PC-3 (cell line): ENCODE measurements at regions of chr14 and their contacts with region 1.

Region 1: DNA sequence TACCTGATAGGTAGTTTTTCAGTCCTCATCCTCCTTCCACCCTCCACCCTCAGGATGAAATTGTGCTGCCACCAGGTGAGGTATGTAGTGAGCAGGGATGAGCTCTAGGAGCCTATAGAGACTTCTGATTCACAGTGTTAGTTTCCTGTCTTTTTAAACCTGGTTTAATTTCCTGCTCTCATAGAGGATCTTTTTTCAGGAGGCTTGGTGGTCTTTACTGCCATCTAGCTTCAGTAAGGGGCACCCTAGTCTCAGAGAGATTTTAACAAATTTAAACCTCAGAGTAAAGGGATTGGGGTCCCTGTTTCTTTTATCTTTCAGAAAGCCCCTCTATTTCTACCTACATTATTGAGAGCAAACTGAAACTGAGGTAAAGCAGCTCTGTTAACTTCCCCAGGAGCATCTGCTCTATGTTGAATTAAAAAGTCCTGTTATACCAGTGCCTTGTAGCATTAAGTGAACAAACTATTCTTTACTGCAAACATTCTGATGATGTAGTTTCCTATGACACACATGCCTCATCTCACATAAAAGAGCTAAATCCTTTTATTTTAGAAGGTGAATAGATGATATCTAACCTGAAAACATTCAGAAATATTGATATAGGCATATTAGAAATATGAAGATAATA is 172.2 kb upstream of the DDHD1 start:
- DNase-seq: peak; percentile 27
- ATAC-seq: peak; percentile 59
- H3K4me3 ChIP-seq: no peak overlapping the region
- H3K27ac ChIP-seq: no peak overlapping the region
- H3K4me1 ChIP-seq: peaks cover 16% of the 10 kb centered on the region
- H3K27me3 ChIP-seq: no peaks in the 10 kb centered on the region
- CTCF ChIP-seq: peak; percentile 52; the same call in 1 of the 2 replicates

Region 2: DNA sequence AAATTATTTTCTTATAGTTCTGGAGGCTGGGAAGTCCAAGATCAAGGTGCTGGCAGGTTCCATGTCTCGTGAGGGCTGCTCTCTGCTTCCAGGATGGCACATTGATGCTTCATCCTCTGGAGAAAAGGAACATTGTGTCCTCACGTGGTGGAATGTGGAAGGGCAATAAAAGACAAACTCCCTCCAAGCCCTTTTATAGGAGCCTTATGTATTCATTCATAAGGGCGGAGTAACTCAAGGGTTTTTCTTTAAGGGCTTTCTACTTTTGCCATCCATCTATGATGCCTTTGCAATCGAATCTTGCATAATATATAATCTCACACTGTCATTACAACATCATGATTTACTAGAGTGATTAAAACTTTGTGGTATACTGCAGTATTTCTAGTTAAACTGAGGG is 39.5 kb before region 1 on chr14:
- CTCF ChIA-PET with region 1: no interaction called
- POLR2A ChIA-PET with region 1: interaction called, 12 read pairs
- intact Hi-C with region 1: no loop called
- DNase-seq: peak; percentile 44
- ATAC-seq: peak; percentile 62
- H3K4me3 ChIP-seq: no peak overlapping the region
- H3K27ac ChIP-seq: no peak overlapping the region
- H3K4me1 ChIP-seq: no peaks in the 10 kb centered on the region
- H3K27me3 ChIP-seq: no peaks in the 10 kb centered on the region
- CTCF ChIP-seq: no peak

Region 3: DNA sequence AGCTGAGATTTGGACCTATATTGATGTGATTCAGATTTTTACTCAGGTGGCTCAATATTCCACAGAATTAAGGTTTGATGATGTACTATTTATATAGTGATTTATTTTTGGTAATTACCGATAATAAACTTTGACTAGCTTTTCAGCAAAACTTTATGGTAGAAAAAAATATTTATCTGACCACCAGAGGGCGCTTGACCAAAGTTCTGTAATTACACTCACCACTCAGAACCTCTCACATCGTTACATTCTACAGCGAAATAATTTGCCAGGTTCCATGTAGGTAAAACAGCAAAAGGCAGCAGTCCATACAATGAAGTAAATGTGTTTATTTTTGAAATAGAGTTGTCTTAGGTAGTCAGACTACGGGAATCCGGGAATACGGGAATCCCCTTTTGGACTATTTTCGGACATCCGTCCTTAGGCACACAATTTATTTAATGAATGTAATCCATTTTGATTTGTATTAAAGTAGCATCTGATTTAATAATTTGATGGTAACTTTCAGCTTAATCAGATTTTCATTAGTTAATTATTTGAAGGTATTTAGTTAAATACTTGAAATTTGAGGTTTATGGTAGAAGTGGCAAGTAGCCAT is 29.2 kb before region 1 on chr14:
- CTCF ChIA-PET with region 1: interaction called, 10 read pairs
- POLR2A ChIA-PET with region 1: no interaction called
- intact Hi-C with region 1: loop called (anchors 1 kb)
- DNase-seq: peak; percentile 67
- ATAC-seq: peak; percentile 71
- H3K4me3 ChIP-seq: no peak overlapping the region
- H3K27ac ChIP-seq: no peak overlapping the region
- H3K4me1 ChIP-seq: no peaks in the 10 kb centered on the region
- H3K27me3 ChIP-seq: no peaks in the 10 kb centered on the region
- CTCF ChIP-seq: peak; percentile 85

Region 4: GRCh38 chr14:53346988-53347387 is 21.7 kb after region 1 on chr14:
- CTCF ChIA-PET with region 1: no interaction called
- POLR2A ChIA-PET with region 1: no interaction called
- intact Hi-C with region 1: no loop called
- DNase-seq: no peak
- ATAC-seq: peak; percentile 35; the same call in 1 of the 2 replicates
- H3K4me3 ChIP-seq: no peak overlapping the region
- H3K27ac ChIP-seq: no peak overlapping the region
- H3K4me1 ChIP-seq: no peaks in the 10 kb centered on the region
- H3K27me3 ChIP-seq: no peaks in the 10 kb centered on the region
- CTCF ChIP-seq: no peak

Region 5: GRCh38 chr14:53368711-53369191 is 43.5 kb after region 1 on chr14:
- CTCF ChIA-PET with region 1: interaction called, 6 read pairs
- POLR2A ChIA-PET with region 1: no interaction called
- intact Hi-C with region 1: loop called (anchors 2 kb)
- DNase-seq: peak; percentile 70
- ATAC-seq: peak; percentile 81
- H3K4me3 ChIP-seq: no peak overlapping the region
- H3K27ac ChIP-seq: peak overlapping the region; percentile 14; the same call in 1 of the 2 replicates
- H3K4me1 ChIP-seq: peaks cover 35% of the 10 kb centered on the region
- H3K27me3 ChIP-seq: no peaks in the 10 kb centered on the region
- CTCF ChIP-seq: no peak

Region 6: GRCh38 chr14:53458368-53458814 is 133.1 kb after region 1 on chr14:
- CTCF ChIA-PET with region 1: no interaction called
- POLR2A ChIA-PET with region 1: no interaction called
- intact Hi-C with region 1: no loop called
- DNase-seq: peak; percentile 95
- ATAC-seq: peak; percentile 95
- H3K4me3 ChIP-seq: peak overlapping the region; percentile 41; the same call in 1 of the 2 replicates
- H3K27ac ChIP-seq: peak overlapping the region; percentile 90
- H3K4me1 ChIP-seq: peaks cover 27% of the 10 kb centered on the region
- H3K27me3 ChIP-seq: no peaks in the 10 kb centered on the region
- CTCF ChIP-seq: no peak